ENCODE measurements at regions of chr20 and their contacts with region 1.

Region 1: DNA sequence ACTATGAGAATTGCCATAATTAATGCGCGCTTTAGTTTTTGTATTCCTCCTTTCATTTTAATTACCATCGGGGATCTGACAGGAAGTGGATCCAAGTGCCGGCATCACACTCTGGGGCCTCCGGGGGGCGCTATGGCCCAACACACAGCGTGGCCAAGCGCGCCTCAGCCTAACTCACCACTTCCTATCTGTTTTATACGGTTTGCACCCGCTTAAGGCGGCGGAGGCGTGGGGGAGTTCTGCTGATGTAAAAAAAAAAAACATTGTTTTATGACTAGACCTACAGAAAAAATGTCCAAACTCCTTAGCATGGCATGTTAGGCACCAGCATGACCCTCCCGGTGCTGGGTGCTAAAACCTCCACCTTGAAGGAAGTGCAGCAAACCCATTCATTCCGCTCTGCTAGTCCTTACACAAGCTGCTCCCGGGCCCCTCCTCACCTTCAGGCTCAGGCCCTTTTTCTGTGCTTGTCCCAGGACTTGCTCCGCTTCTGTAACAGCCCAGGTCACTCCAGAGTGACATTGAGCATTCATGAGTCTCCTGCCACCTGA is 4.5 kb upstream of the EBF4 start:
- DNase-seq: peak; percentile 15
- ATAC-seq: peak; percentile 56
- H3K4me3 ChIP-seq: no peak overlapping the region
- H3K27ac ChIP-seq: no peak overlapping the region
- H3K4me1 ChIP-seq: peaks cover 0 to 11% of the 10 kb centered on the region in 2 experiments; a peak in 2 of 4 replicates
- H3K27me3 ChIP-seq: no peaks in the 10 kb centered on the region
- CTCF ChIP-seq: peak; percentile 47 to 82 (median 75)
- POLR2A ChIP-seq: no peak
- RAD21 ChIP-seq: peak; percentile 72

Region 2: GRCh38 chr20:2742934-2743559 is 54.9 kb after region 1 on chr20:
- CTCF ChIA-PET with region 1: interaction called, 5 read pairs
- POLR2A ChIA-PET with region 1: no interaction called
- RAD21 ChIA-PET with region 1: no interaction called
- intact Hi-C with region 1: loop called (anchors 2 kb)
- DNase-seq: peak; percentile 54
- ATAC-seq: peak; percentile 99
- H3K4me3 ChIP-seq: no peak overlapping the region
- H3K27ac ChIP-seq: no peak overlapping the region
- H3K4me1 ChIP-seq: peaks cover 0 to 8% of the 10 kb centered on the region in 2 experiments; a peak in 2 of 4 replicates
- H3K27me3 ChIP-seq: no peaks in the 10 kb centered on the region
- CTCF ChIP-seq: peak; percentile 56 to 98 (median 95); a peak in 5 of 6 replicates
- POLR2A ChIP-seq: no peak
- RAD21 ChIP-seq: peak; percentile 60

Region 3: DNA sequence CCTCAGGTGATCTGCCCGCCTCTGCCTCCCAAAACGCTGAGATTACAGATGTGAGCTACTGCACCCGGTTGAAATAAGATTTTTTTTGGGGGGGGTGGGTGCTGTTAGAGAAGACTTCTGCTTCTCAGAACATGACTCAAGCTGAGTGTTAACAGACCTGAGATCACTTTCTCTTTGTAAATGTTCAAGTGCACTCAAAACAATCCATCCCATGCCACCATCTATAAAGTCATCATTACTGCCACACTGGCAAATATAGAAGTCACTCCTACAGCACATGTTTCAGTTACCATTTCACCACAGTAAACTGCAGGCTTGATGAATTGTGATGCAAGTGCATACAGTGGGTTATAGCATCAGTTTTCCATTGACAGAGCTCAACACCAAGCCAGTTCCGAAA is 161.4 kb after region 1 on chr20:
- CTCF ChIA-PET with region 1: no interaction called
- POLR2A ChIA-PET with region 1: no interaction called
- RAD21 ChIA-PET with region 1: no interaction called
- intact Hi-C with region 1: loop called (anchors 5 kb)
- DNase-seq: no peak
- ATAC-seq: no peak
- H3K4me3 ChIP-seq: no peak overlapping the region
- H3K27ac ChIP-seq: no peak overlapping the region
- H3K4me1 ChIP-seq: no peaks in the 10 kb centered on the region
- H3K27me3 ChIP-seq: no peaks in the 10 kb centered on the region
- CTCF ChIP-seq: no peak
- POLR2A ChIP-seq: no peak
- RAD21 ChIP-seq: no peak

Region 4: GRCh38 chr20:4524307-4524706 is 1836.2 kb after region 1 on chr20:
- CTCF ChIA-PET with region 1: no interaction called
- POLR2A ChIA-PET with region 1: no interaction called
- RAD21 ChIA-PET with region 1: no interaction called
- intact Hi-C with region 1: no loop called
- DNase-seq: no peak
- ATAC-seq: no peak
- H3K4me3 ChIP-seq: no peak overlapping the region
- H3K27ac ChIP-seq: no peak overlapping the region
- H3K4me1 ChIP-seq: no peaks in the 10 kb centered on the region
- H3K27me3 ChIP-seq: no peaks in the 10 kb centered on the region
- CTCF ChIP-seq: peak in 1 of 3 experiments; percentile 38; a peak in 2 of 6 replicates
- POLR2A ChIP-seq: no peak
- RAD21 ChIP-seq: no peak